H1 (cell line): ENCODE measurements at regions of chr1 and their contacts with region 1.

Region 1: GRCh38 chr1:225554216-225554812 is 98.6 kb downstream of the ENAH start:
- DNase-seq: no peak
- H3K4me3 ChIP-seq: no peak overlapping the region
- H3K27ac ChIP-seq: no peak overlapping the region
- H3K4me1 ChIP-seq: no peaks in the 10 kb centered on the region
- H3K27me3 ChIP-seq: no peaks in the 10 kb centered on the region
- CTCF ChIP-seq: peak in 1 of 3 experiments; percentile 22; a peak in 2 of 4 replicates
- EP300 ChIP-seq: no peak
- POLR2A ChIP-seq: no peak
- RAD21 ChIP-seq: peak in 1 of 2 experiments; percentile 45; a peak in 3 of 4 replicates

Region 2: GRCh38 chr1:225498549-225499136 is 55.7 kb before region 1 on chr1:
- CTCF ChIA-PET with region 1: no interaction called
- POLR2A ChIA-PET with region 1: no interaction called
- DNase-seq: no peak
- H3K4me3 ChIP-seq: no peak overlapping the region
- H3K27ac ChIP-seq: no peak overlapping the region
- H3K4me1 ChIP-seq: peaks cover 0 to 7% (median 3%) of the 10 kb centered on the region in 4 experiments; a peak in 6 of 7 replicates
- H3K27me3 ChIP-seq: no peaks in the 10 kb centered on the region
- CTCF ChIP-seq: no peak
- EP300 ChIP-seq: no peak
- POLR2A ChIP-seq: no peak
- RAD21 ChIP-seq: no peak

Region 3: DNA sequence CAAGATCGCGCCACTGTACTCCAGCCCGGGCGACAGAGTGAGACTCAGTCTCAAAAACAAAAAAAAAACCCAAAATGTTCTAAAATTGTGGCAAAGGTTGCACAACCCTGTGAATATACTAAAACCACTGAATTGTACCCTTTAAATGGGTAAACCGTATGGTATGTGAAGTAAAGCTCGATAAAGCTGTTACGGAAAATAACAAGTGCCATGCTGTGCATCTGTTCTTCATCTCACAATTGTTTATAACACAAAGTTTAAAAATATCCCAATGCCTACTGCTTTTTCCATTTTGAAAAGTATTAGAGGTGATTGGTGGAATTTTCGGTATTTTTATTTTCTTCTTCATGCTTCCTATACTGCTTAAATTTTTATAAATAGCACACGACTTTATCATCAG is 12.9 kb before region 1 on chr1:
- CTCF ChIA-PET with region 1: interaction called, 8 read pairs
- POLR2A ChIA-PET with region 1: interaction called, 12 read pairs
- DNase-seq: no peak
- H3K4me3 ChIP-seq: no peak overlapping the region
- H3K27ac ChIP-seq: no peak overlapping the region
- H3K4me1 ChIP-seq: peaks cover 2 to 13% (median 8%) of the 10 kb centered on the region in 4 experiments; a peak in 5 of 7 replicates
- H3K27me3 ChIP-seq: no peaks in the 10 kb centered on the region
- CTCF ChIP-seq: no peak
- EP300 ChIP-seq: no peak
- POLR2A ChIP-seq: no peak
- RAD21 ChIP-seq: no peak

Region 4: DNA sequence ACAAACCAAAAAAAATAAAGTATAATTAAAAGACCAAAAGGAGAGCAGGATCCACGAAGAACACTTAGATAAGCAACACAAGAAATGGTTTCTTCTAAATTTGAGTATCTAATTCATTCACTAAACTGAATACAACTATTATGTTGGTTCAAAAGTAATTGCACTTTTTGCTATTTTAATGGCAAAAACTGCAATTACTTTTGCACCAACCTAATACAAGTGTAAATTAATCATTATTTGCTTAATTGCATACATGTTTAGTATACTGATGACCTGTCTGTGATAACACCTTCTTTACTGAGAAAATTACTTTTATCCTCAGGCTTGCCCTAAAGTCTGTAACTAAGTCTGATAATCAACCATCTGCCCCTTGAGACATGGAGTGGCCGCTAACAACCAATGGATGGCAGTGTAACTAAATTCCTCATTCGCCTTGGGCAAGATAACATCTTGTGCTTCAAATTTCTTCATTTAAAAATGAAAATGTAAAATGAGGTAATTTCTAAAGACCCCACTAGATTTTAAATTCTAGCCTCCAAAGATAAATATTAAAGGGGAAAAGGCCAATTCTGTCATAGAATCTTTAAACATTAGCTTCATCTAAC is 13.4 kb after region 1 on chr1:
- CTCF ChIA-PET with region 1: interaction called, 11 read pairs
- POLR2A ChIA-PET with region 1: interaction called, 3 read pairs
- DNase-seq: no peak
- H3K4me3 ChIP-seq: no peak overlapping the region
- H3K27ac ChIP-seq: no peak overlapping the region
- H3K4me1 ChIP-seq: peaks cover 0 to 6% (median 0%) of the 10 kb centered on the region in 4 experiments; a peak in 2 of 7 replicates
- H3K27me3 ChIP-seq: no peaks in the 10 kb centered on the region
- CTCF ChIP-seq: peak in 1 of 3 experiments; percentile 49; a peak in 1 of 4 replicates
- EP300 ChIP-seq: no peak
- POLR2A ChIP-seq: no peak
- RAD21 ChIP-seq: peak; percentile 40 to 47